ENCODE measurements at regions of chr1 and their contacts with region 1.

Region 1: DNA sequence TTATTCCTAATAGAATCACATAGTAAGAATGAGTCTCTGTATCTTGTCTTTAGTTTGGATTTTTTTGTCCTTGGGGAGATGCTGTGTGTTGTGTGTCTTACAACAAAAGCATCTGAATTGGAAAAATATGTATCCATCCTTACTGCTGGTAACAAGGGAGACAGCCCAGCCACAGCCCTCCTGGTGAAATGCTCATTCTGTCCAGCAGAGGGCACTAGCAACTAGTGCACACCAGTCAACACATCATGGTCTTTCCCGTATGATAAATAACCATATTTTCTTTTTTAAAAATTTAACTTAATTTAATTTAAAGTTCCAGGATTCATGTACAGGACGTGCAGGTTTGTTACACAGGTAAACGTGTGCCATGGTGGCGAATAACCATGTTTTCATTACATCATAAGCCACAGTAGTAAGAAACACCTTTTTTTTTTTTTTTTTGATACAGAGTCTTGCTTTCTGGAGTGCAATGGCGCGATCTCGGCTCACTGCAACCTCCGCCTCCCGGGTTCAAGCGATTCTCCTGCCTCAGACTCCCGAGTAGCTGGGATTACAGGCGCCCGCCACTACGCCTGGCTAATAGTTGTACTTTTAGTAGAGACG is 245.1 kb downstream of the PTBP2 start:
- DNase-seq: peak; percentile 86

Region 2: GRCh38 chr1:95863086-95863485 is 1103.6 kb before region 1 on chr1:
- intact Hi-C with region 1: no loop called
- DNase-seq: no peak

Region 3: DNA sequence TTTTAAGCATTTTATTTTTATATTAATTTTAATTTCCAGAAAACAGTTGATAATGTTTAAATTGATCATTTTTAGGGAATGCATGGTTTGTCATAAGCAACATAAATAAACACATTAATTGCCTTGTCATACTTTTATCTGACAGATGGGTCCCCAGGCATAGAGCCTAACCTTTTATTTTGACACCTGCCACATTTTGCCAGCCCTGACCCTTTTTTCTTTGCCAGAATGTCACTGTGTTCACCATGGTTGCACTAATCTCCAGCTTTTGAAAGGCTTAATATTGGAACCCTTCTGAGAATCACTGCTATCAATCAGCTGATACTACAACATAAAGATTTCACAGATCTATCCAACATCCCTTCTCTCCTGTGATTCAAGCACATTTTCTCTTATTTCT is 1010.2 kb after region 1 on chr1:
- intact Hi-C with region 1: no loop called
- DNase-seq: no peak

Region 4: DNA sequence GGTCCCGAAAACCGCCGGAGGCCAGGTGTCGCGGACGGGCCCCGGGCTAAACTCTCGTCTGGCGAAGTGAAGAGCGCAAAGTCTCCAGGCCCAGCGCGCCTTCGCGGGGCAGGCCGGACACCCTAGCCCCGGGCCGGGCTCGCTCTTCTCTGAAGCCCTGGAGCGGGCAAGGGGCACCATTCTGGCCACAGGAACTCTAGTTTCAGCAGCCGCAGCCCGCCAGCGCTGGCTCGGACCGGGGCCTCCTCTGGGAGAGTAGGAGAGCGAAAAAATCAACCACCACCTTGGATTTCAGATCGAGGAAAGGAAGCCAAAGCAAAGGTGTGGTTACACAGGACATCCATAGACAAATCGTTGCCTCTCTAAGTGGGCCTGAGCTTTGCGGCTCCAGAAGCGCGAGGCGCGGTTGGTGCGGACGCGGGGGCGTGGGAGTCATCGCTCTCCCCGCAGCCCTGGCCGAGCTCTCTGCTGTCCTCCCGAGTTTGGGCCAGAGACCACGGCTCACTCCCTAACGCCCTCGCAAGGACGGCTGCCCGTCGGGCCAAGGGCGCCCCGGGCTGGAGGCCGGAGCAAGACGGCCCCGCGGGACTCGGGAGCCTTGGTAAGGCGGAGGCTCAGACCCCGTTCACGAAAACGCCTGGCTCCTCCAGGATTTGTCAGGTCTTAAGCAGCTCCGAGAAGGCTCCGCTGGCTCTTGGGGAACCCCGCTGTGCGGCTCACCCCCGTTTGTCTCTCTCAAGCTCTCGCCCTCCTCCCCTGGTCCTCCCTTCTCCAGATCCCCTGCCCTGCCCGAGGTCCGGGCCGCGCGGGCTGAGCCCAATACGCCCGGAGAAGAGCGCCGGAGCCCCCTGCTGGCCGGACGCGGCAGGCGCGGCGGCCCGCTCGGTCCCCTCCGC is 1087.1 kb after region 1 on chr1:
- intact Hi-C with region 1: loop called in 1 of 2 experiments (anchors 10 kb)
- DNase-seq: peak; percentile 88

Region 5: DNA sequence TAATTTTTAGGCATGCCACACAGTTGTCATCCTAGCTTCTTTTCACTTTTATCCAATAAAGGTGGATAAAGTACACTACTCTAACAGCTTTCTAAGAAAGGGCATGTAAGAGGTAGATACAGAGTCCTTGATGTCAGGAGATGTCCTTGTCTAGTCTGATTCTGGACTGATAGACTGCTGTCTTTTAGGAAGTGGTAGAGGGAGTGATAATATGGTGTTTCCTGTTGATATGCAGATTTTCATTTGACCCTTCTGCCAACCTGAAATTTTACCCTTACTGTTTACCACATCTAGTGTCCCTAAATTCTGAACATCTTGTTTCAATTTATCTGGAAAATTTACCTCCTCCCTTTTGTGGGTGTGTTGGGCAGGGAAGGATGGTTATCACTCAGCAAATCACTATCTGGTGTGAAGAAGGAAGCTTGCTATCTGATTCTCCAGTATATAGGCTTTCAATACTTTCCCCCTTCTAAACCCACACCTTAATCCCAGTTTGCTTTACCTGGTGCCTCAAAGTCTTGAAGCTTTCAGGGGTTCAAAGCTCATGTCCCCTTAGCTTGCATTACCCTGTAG is 1340.0 kb after region 1 on chr1:
- intact Hi-C with region 1: no loop called
- DNase-seq: no peak

Measured in posterior vena cava (tissue), 2 donors.